Activated CD8-positive, alpha-beta T cell treated with anti-CD3 and anti-CD28 coated beads for 36 hours (primary cell): ENCODE measurements at regions of chr7 and their contacts with region 1.

Region 1: GRCh38 chr7:53383131-53383530 is 347.7 kb downstream of the POM121L12 start:
- DNase-seq: no peak
- ATAC-seq: no peak
- H3K4me3 Mint-ChIP-seq: no peak overlapping the region
- H3K27ac Mint-ChIP-seq: no peak overlapping the region
- H3K4me1 Mint-ChIP-seq: no peaks in the 10 kb centered on the region
- H3K27me3 Mint-ChIP-seq: no peaks in the 10 kb centered on the region
- CTCF ChIP-seq: no peak

Region 2: DNA sequence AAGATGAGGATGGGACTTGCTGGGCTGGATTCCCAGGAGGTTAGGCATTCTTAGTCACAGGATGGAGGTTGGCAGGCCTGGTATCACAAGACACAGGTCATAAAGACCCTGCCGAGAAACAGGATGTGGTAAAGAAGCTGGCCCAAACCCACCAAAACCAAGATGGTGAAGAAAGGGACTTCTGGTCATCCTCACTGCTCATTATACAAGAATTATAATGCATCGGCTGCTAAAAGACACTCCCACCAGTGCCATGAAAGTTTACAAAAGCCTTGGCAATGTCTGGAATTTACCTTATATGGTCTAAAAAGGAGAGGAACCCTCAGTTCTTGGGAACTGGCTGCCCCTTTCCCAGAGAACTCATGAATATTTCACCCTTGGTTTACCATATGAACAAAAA is 693.2 kb before region 1 on chr7:
- CTCF ChIA-PET with region 1: no interaction called
- POLR2A ChIA-PET with region 1: no interaction called
- intact Hi-C with region 1: loop called (anchors 10 kb)
- DNase-seq: no peak
- ATAC-seq: no peak
- H3K4me3 Mint-ChIP-seq: no peak overlapping the region
- H3K27ac Mint-ChIP-seq: no peak overlapping the region
- H3K4me1 Mint-ChIP-seq: no peaks in the 10 kb centered on the region
- H3K27me3 Mint-ChIP-seq: no peaks in the 10 kb centered on the region
- CTCF ChIP-seq: no peak

Region 3: GRCh38 chr7:53476566-53476965 is 93.4 kb after region 1 on chr7:
- CTCF ChIA-PET with region 1: no interaction called
- POLR2A ChIA-PET with region 1: no interaction called
- intact Hi-C with region 1: no loop called
- DNase-seq: no peak
- ATAC-seq: no peak
- H3K4me3 Mint-ChIP-seq: no peak overlapping the region
- H3K27ac Mint-ChIP-seq: no peak overlapping the region
- H3K4me1 Mint-ChIP-seq: no peaks in the 10 kb centered on the region
- H3K27me3 Mint-ChIP-seq: no peaks in the 10 kb centered on the region
- CTCF ChIP-seq: no peak

Region 4: DNA sequence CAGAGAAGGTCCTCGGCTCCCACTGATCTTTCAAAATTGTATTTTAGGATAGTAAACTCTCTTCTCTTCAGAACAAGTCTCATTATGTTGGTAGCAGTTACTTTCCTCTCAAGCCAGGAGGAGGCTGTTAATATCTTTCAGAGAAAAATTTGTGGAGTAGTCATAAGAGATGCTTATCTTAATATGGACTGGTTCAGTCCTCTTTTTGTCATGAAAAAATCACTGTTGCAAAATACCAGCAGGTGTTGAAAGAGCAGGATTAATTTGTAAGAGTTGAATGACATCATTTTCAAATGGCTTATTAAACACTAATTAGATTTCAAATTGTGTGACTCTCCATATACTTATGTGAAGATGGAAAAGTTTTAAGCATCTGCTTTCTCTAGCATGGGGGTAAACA is 314.8 kb after region 1 on chr7:
- CTCF ChIA-PET with region 1: no interaction called
- POLR2A ChIA-PET with region 1: no interaction called
- intact Hi-C with region 1: no loop called
- DNase-seq: no peak
- ATAC-seq: no peak
- H3K4me3 Mint-ChIP-seq: no peak overlapping the region
- H3K27ac Mint-ChIP-seq: no peak overlapping the region
- H3K4me1 Mint-ChIP-seq: no peaks in the 10 kb centered on the region
- H3K27me3 Mint-ChIP-seq: no peaks in the 10 kb centered on the region
- CTCF ChIP-seq: no peak

Region 5: GRCh38 chr7:54697659-54698186 is 1314.6 kb after region 1 on chr7:
- CTCF ChIA-PET with region 1: no interaction called
- POLR2A ChIA-PET with region 1: no interaction called
- intact Hi-C with region 1: no loop called
- DNase-seq: no peak
- ATAC-seq: no peak
- H3K4me3 Mint-ChIP-seq: no peak overlapping the region
- H3K27ac Mint-ChIP-seq: no peak overlapping the region
- H3K4me1 Mint-ChIP-seq: no peaks in the 10 kb centered on the region
- H3K27me3 Mint-ChIP-seq: no peaks in the 10 kb centered on the region
- CTCF ChIP-seq: no peak